ENCODE measurements at regions of chr1 and their contacts with region 1.

Region 1: GRCh38 chr1:182054698-182055326 is 6.7 kb downstream of the ZNF648 start:
- DNase-seq: peak; percentile 69
- ATAC-seq: peak; percentile 83
- H3K4me3 Mint-ChIP-seq: no peak overlapping the region
- H3K27ac Mint-ChIP-seq: no peak overlapping the region
- H3K4me1 Mint-ChIP-seq: no peaks in the 10 kb centered on the region
- H3K27me3 Mint-ChIP-seq: peaks cover 26% of the 10 kb centered on the region
- CTCF ChIP-seq: peak; percentile 50

Region 2: GRCh38 chr1:181479137-181479745 is 575.6 kb before region 1 on chr1:
- CTCF ChIA-PET with region 1: interaction called, 10 read pairs
- POLR2A ChIA-PET with region 1: no interaction called
- DNase-seq: peak; percentile 56
- ATAC-seq: peak; percentile 66
- H3K4me3 Mint-ChIP-seq: no peak overlapping the region
- H3K27ac Mint-ChIP-seq: no peak overlapping the region
- H3K4me1 Mint-ChIP-seq: peaks cover 21% of the 10 kb centered on the region
- H3K27me3 Mint-ChIP-seq: peaks cover 47% of the 10 kb centered on the region
- CTCF ChIP-seq: peak; percentile 55

Region 3: DNA sequence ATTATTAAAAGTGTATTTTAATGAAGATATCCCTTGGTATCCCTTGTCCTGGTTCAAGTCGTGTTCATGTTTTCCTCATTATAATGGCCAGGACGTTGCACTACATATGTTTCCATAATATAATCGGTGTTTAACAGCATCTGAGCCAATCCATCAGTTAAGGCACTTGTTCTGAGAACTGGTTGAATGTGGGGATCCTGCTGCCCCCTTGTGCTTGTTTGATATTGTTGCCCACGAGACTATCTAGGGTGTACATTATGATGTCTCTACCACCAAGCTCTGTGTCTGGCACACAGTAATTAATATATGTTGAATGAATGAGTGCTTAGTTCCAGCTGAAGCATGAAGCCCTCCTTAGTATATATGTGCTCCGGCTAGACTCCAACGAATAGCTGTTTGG is 378.5 kb before region 1 on chr1:
- CTCF ChIA-PET with region 1: interaction called, 11 read pairs
- POLR2A ChIA-PET with region 1: no interaction called
- DNase-seq: peak; percentile 32
- ATAC-seq: peak; percentile 81
- H3K4me3 Mint-ChIP-seq: no peak overlapping the region
- H3K27ac Mint-ChIP-seq: no peak overlapping the region
- H3K4me1 Mint-ChIP-seq: peaks cover 4% of the 10 kb centered on the region; the same call in 1 of the 2 replicates
- H3K27me3 Mint-ChIP-seq: no peaks in the 10 kb centered on the region
- CTCF ChIP-seq: no peak

Region 4: DNA sequence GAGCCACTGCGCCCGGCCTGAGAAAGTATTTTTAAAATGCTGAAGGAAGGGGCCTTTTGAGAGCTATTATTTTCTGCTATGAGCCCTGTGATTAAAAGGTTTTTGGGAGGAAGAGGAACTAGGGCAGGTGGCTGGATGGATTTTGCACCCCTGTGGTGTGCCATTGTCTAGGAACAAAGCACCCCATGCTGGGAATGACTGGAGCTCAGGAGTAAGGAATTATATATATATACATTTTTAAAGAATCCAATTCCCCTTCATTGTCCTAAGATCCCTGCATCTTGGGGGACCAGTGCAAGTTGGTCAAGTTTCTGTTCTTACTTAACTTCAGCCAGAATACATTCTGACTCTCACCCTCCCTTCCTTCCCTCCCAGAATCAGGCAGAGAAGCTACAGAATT is 84.9 kb before region 1 on chr1:
- CTCF ChIA-PET with region 1: interaction called, 10 read pairs
- POLR2A ChIA-PET with region 1: no interaction called
- DNase-seq: peak; percentile 86
- ATAC-seq: peak; percentile 91
- H3K4me3 Mint-ChIP-seq: no peak overlapping the region
- H3K27ac Mint-ChIP-seq: peak overlapping the region; percentile 89
- H3K4me1 Mint-ChIP-seq: peaks cover 44% of the 10 kb centered on the region
- H3K27me3 Mint-ChIP-seq: no peaks in the 10 kb centered on the region
- CTCF ChIP-seq: no peak

Region 5: DNA sequence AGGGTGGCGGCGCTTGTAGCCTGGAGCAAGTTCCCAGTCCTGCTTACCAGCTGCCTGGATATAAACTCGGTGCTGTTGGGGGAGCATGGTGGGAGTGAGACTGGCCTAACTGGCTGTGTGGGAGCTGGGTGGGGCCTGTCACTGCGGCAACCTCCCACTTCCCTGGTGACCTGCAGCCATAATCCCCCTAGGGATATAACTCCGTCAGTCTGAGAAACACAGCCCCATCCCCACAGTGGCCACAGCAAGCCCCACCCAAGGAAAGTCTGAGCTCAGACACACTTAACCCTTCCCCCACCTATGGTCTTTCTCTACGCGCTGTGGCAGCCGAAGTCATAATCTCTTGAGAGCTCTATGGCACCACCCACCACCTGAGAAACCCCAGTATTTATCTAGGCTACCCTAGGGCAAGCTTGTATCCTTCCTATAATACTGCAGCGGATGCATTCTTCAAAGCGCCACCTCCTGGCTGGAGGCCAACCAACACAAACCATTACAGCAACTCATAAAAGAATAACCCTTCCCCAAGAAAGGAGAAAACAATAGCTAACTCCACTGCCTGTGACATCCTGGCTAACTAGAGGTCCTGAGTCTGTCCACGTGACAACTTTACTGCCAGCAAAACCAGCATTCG is 50.7 kb before region 1 on chr1:
- CTCF ChIA-PET with region 1: interaction called, 13 read pairs
- POLR2A ChIA-PET with region 1: no interaction called
- DNase-seq: peak; percentile 40
- ATAC-seq: peak; percentile 89
- H3K4me3 Mint-ChIP-seq: no peak overlapping the region
- H3K27ac Mint-ChIP-seq: no peak overlapping the region
- H3K4me1 Mint-ChIP-seq: peaks cover 24% of the 10 kb centered on the region
- H3K27me3 Mint-ChIP-seq: no peaks in the 10 kb centered on the region; the same call in 1 of the 2 replicates
- CTCF ChIP-seq: no peak

Region 6: DNA sequence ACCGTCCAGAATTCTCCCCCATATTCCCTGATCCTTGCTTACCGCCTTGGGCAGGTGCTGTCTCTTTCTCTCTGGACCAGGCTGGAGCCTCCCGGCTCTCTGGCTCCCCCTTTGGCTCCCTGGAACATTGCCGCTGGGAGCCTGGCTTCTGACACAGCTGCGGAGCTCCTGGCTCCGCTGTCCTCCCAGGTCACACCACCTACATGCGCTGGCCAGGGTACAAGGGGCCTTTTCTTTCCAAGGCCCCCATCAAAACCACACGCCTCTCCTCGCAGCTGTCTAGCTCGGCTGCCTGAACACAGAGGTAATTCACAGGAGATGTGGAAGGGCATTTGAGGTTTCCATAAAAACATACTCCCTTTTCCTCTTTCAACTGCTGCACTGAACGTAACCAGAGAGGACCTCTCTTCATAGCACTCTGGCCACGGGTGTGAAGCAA is 14.2 kb after region 1 on chr1:
- CTCF ChIA-PET with region 1: interaction called, 22 read pairs
- POLR2A ChIA-PET with region 1: no interaction called
- DNase-seq: peak; percentile 74
- ATAC-seq: peak; percentile 99
- H3K4me3 Mint-ChIP-seq: peak overlapping the region; percentile 16
- H3K27ac Mint-ChIP-seq: no peak overlapping the region
- H3K4me1 Mint-ChIP-seq: peaks cover 5% of the 10 kb centered on the region
- H3K27me3 Mint-ChIP-seq: peaks cover 1% of the 10 kb centered on the region; the same call in 1 of the 2 replicates
- CTCF ChIP-seq: peak; percentile 51

Measured in WTC11 (cell line).